K562 (cell line): ENCODE measurements at regions of chr7 and their contacts with region 1.

Region 1: DNA sequence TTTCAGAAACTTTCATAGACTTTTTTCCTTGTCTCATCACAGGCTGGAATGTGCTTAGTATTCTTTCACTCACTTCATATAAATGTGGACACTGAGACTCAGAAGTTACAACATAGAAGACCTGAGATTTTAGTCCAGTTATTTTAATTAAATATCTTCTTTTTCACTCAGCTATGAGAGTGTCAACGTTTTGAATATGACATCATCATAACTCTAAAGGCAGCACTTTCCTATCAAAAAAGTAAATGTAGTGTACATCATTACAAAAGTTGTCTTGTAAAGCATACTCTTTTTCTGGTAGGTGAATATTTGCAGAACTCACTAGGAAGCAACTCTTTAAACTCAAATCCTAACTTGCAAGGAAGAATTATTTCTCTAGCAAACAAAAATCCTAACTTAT is 291.9 kb upstream of the GNAI1 start:
- DNase-seq: no peak
- ATAC-seq: no peak
- H3K4me3 ChIP-seq: no peak overlapping the region
- H3K27ac ChIP-seq: no peak overlapping the region
- H3K4me1 ChIP-seq: no peaks in the 10 kb centered on the region
- H3K27me3 ChIP-seq: no peaks in the 10 kb centered on the region
- CTCF ChIP-seq: no peak
- EP300 ChIP-seq: no peak
- POLR2A ChIP-seq: no peak
- RAD21 ChIP-seq: no peak

Region 2: GRCh38 chr7:81690251-81690650 is 1847.6 kb after region 1 on chr7:
- CTCF ChIA-PET with region 1: no interaction called
- POLR2A ChIA-PET with region 1: no interaction called
- in situ Hi-C with region 1: loop called (anchors 10 kb)
- intact Hi-C with region 1: no loop called
- DNase-seq: no peak
- ATAC-seq: no peak
- H3K4me3 ChIP-seq: no peak overlapping the region
- H3K27ac ChIP-seq: no peak overlapping the region
- H3K4me1 ChIP-seq: no peaks in the 10 kb centered on the region
- H3K27me3 ChIP-seq: no peaks in the 10 kb centered on the region
- CTCF ChIP-seq: no peak
- EP300 ChIP-seq: no peak
- POLR2A ChIP-seq: no peak
- RAD21 ChIP-seq: no peak